ENCODE measurements at regions of chr7 and their contacts with region 1.

Region 1: DNA sequence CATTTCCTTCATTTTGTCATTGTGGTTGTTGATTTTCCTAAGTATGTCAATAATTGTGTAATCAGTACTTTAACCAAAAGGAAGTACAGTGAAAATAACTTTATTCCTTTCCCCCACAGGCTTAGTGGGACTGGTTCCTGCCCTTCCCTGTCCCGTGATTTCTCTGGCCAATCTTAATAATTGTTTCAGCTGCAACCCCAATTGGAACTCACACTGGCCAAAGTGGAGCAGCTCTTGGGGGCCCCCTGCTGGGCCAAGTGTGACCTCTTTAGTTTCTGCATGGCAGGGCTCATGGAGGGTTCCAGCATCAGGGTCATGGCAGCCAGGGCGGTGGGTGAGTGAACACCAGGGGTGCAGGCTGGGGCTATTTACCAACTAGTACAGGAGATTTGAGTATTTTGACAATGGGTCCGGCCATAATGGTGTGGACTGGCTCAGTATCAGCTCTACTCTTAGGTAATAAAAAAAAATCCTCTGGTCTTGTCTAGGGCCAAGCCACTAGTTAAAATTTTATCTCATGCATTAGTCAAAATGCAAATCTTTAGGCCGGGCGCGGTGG is 31.7 kb downstream of the CYCS start:
- DNase-seq: peak; percentile 63 to 71 (median 68)
- H3K4me3 ChIP-seq: no peak overlapping the region
- H3K4me3 Mint-ChIP-seq: no peak overlapping the region
- H3K27ac ChIP-seq: no peak overlapping the region
- H3K27ac Mint-ChIP-seq: peak overlapping the region in 2 of 7 donors; percentile 6 to 74
- H3K4me1 ChIP-seq: peaks cover 3% of the 10 kb centered on the region
- H3K4me1 Mint-ChIP-seq: peaks cover 6 to 14% (median 8%) of the 10 kb centered on the region in 4 donors
- H3K27me3 ChIP-seq: no peaks in the 10 kb centered on the region
- H3K27me3 Mint-ChIP-seq: peaks cover 0 to 3% of the 10 kb centered on the region in 2 donors

Region 2: DNA sequence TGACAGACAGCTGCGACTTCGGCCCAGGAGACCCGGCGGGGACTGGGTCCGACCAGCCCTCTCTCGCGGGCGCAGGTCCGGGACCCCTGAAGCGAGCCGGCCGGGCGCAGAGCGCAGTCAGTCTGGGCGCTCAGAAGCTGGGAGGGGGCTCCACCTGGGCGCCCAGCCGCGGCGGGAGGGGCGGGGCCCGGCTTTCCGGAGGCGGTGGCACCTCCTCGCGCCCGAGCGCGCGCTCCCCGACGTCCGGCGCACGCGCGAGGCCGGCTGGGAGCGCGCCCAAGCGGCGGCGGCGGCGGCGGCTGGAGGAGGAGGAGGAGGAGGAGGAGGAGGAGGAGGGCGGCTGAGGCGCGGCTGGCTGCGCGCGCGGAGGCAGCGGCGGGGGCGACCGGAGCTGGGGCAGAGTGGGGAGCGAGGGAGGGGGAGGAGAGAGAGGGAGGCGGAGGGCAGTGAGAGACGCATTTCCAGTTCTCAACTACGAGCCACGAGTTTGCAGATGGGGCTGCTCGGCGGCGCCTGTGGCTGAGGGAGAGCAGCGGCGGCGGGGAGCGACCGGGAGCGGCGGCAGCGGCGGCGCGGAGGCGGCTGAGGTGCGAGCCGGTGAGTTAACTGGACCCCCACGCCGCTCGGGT is 520.2 kb before region 1 on chr7 and contains the start of gene PALS2:
- CTCF ChIA-PET with region 1: interaction called, 4 read pairs
- POLR2A ChIA-PET with region 1: no interaction called
- intact Hi-C with region 1: loop called (anchors 5 kb)
- DNase-seq: peak; percentile 81 to 87 (median 83)
- H3K4me3 ChIP-seq: peak within 1 kb of the TSS; percentile 62 to 66
- H3K4me3 Mint-ChIP-seq: peak within 1 kb of the TSS; percentile 92 to 99 (median 94)
- H3K27ac ChIP-seq: peak within 1 kb of the TSS; percentile 56
- H3K27ac Mint-ChIP-seq: peak within 1 kb of the TSS; percentile 86 to 95 (median 92)
- H3K4me1 ChIP-seq: peaks cover 32% of the 10 kb centered on the region
- H3K4me1 Mint-ChIP-seq: peaks cover 20 to 38% (median 28%) of the 10 kb centered on the region in 4 donors
- H3K27me3 ChIP-seq: no peaks in the 10 kb centered on the region
- H3K27me3 Mint-ChIP-seq: peaks cover 2 to 4% of the 10 kb centered on the region in 2 donors
- total RNA-seq, gene PALS2: 32.9 to 50.1 TPM

Region 3: GRCh38 chr7:24819916-24820689 is 273.2 kb before region 1 on chr7:
- CTCF ChIA-PET with region 1: interaction called, 414 read pairs
- POLR2A ChIA-PET with region 1: interaction called, 31 read pairs
- intact Hi-C with region 1: loop called (anchors 1 kb)
- DNase-seq: peak; percentile 70 to 81 (median 74)
- H3K4me3 ChIP-seq: peak overlapping the region in 1 of 2 donors; percentile 23
- H3K4me3 Mint-ChIP-seq: peak overlapping the region; percentile 78 to 90 (median 84)
- H3K27ac ChIP-seq: peak overlapping the region; percentile 78
- H3K27ac Mint-ChIP-seq: peak overlapping the region; percentile 88 to 100 (median 98)
- H3K4me1 ChIP-seq: peaks cover 42% of the 10 kb centered on the region
- H3K4me1 Mint-ChIP-seq: peaks cover 29 to 55% (median 42%) of the 10 kb centered on the region in 4 donors
- H3K27me3 ChIP-seq: no peaks in the 10 kb centered on the region
- H3K27me3 Mint-ChIP-seq: no peaks in the 10 kb centered on the region

Region 4: DNA sequence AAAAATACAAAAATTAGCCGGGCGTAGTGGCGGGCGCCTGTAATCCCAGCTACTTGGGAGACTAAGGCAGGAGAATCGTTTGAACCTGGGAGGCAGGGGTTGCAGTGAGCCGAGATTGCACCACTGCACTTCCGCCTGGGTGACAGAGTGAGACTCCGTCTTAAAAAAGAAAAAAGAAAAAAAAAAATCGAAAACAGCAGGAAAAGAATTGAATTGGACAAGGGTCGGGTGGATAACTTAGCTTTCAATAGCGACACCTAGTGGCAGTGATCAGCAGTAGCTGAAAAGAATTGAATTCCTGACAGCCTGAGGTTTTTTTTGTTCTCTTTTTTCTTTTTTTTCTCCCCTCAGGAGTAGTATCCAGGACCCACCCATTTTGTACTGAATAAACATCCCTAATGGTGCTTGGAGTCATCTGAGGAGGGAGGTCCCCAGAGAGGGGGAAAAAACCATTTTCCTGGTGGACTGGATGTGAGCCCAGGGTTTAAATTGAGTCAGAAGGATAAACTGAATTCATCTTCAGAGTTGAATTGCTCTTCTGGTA is 23.4 kb before region 1 on chr7:
- CTCF ChIA-PET with region 1: interaction called, 33 read pairs
- POLR2A ChIA-PET with region 1: interaction called, 4 read pairs
- intact Hi-C with region 1: no loop called
- DNase-seq: peak; percentile 43 to 57 (median 54)
- H3K4me3 ChIP-seq: no peak overlapping the region
- H3K4me3 Mint-ChIP-seq: no peak overlapping the region
- H3K27ac ChIP-seq: no peak overlapping the region
- H3K27ac Mint-ChIP-seq: peak overlapping the region in 2 of 7 donors; percentile 44 to 51
- H3K4me1 ChIP-seq: peaks cover 5% of the 10 kb centered on the region
- H3K4me1 Mint-ChIP-seq: peaks cover 0 to 7% (median 4%) of the 10 kb centered on the region in 4 donors
- H3K27me3 ChIP-seq: no peaks in the 10 kb centered on the region
- H3K27me3 Mint-ChIP-seq: no peaks in the 10 kb centered on the region

Region 5: DNA sequence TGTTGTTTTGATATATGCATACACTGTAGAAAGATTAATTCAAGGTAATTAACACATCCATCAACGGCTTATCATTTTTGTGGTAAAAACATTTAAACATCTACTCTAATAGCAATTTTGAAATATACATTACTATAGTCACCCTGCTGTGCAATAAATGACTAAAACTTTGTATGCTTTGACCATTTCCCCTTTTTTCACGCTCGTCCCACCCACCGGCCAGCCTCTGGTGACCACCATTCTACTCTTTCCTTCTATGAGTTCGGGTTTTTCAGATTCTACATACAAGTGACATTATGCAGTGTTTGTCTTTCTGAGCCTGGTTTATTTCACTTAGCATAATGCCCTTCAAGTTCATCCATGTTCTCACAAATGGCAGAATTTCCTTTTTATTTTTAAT is 10.4 kb after region 1 on chr7:
- CTCF ChIA-PET with region 1: interaction called, 19 read pairs
- POLR2A ChIA-PET with region 1: no interaction called
- intact Hi-C with region 1: no loop called
- DNase-seq: no peak
- H3K4me3 ChIP-seq: no peak overlapping the region
- H3K4me3 Mint-ChIP-seq: no peak overlapping the region
- H3K27ac ChIP-seq: no peak overlapping the region
- H3K27ac Mint-ChIP-seq: no peak overlapping the region
- H3K4me1 ChIP-seq: no peaks in the 10 kb centered on the region
- H3K4me1 Mint-ChIP-seq: no peaks in the 10 kb centered on the region
- H3K27me3 ChIP-seq: peaks cover 4% of the 10 kb centered on the region
- H3K27me3 Mint-ChIP-seq: peaks cover 3 to 4% of the 10 kb centered on the region in 2 donors

Region 6: GRCh38 chr7:25216837-25217236 is 123.5 kb after region 1 on chr7:
- CTCF ChIA-PET with region 1: no interaction called
- POLR2A ChIA-PET with region 1: no interaction called
- intact Hi-C with region 1: no loop called
- DNase-seq: peak in 4 of 5 donors; percentile 20 to 42 (median 28)
- H3K4me3 ChIP-seq: no peak overlapping the region
- H3K4me3 Mint-ChIP-seq: no peak overlapping the region
- H3K27ac ChIP-seq: no peak overlapping the region
- H3K27ac Mint-ChIP-seq: no peak overlapping the region
- H3K4me1 ChIP-seq: no peaks in the 10 kb centered on the region
- H3K4me1 Mint-ChIP-seq: no peaks in the 10 kb centered on the region
- H3K27me3 ChIP-seq: no peaks in the 10 kb centered on the region
- H3K27me3 Mint-ChIP-seq: peaks cover 15 to 25% of the 10 kb centered on the region in 2 donors

Region 7: GRCh38 chr7:25272265-25272664 is 178.9 kb after region 1 on chr7:
- CTCF ChIA-PET with region 1: no interaction called
- POLR2A ChIA-PET with region 1: no interaction called
- intact Hi-C with region 1: no loop called
- DNase-seq: no peak
- H3K4me3 ChIP-seq: no peak overlapping the region
- H3K4me3 Mint-ChIP-seq: no peak overlapping the region
- H3K27ac ChIP-seq: no peak overlapping the region
- H3K27ac Mint-ChIP-seq: no peak overlapping the region
- H3K4me1 ChIP-seq: no peaks in the 10 kb centered on the region
- H3K4me1 Mint-ChIP-seq: no peaks in the 10 kb centered on the region
- H3K27me3 ChIP-seq: no peaks in the 10 kb centered on the region
- H3K27me3 Mint-ChIP-seq: peaks cover 3 to 9% of the 10 kb centered on the region in 2 donors